ENCODE measurements at regions of chr10 and their contacts with region 1.

Region 1: DNA sequence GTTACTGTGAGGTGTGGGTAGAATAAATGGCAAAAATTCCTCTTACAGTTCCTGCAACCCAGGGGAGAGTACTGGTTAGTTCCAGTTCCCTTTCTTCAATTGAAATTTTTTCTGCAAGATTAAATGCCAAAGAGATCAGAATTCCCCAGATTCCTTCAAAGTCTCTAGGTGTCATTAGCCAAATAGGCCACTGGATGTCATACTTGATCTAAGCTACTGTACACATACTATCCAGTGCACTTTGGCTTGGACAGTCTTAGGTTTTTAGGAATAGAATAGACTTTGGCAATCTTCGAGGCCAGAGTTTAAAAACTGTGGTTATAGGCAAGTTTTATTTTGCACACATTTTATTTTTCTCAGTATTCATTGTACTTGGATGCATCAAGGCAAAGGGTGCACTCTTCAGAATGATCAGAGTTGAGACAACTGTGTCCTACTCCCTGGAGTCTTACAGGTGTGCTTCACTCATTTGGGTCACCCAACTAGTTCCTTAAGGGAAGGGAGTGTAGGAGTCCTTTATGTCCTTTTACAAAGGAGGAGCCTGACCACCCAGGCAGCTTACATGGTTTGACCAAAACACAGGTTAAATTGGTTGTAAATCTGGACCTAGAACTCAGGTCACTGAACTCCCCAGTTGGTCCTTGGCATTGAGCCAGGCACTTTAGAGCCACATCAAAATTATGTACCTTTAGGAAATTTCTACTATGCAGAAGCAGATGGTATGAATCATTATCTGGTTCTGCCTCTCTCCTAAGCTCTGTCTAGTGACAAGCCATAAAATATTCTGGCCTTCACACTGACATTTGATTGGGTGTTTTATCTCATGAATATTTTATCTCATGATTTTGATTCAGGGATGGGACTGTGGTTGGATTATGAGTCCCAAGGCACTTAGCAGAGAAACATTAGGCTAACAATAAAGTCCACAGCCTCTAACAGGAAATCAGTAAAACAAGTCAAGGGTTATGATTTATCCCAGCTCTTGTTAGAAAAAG is 49.5 kb downstream of the ASAH2B start:
- DNase-seq: no peak
- ATAC-seq: peak; percentile 64 to 70
- H3K4me3 ChIP-seq: no peak overlapping the region
- H3K27ac ChIP-seq: no peak overlapping the region
- H3K4me1 ChIP-seq: no peaks in the 10 kb centered on the region
- H3K27me3 ChIP-seq: no peaks in the 10 kb centered on the region

Region 2: DNA sequence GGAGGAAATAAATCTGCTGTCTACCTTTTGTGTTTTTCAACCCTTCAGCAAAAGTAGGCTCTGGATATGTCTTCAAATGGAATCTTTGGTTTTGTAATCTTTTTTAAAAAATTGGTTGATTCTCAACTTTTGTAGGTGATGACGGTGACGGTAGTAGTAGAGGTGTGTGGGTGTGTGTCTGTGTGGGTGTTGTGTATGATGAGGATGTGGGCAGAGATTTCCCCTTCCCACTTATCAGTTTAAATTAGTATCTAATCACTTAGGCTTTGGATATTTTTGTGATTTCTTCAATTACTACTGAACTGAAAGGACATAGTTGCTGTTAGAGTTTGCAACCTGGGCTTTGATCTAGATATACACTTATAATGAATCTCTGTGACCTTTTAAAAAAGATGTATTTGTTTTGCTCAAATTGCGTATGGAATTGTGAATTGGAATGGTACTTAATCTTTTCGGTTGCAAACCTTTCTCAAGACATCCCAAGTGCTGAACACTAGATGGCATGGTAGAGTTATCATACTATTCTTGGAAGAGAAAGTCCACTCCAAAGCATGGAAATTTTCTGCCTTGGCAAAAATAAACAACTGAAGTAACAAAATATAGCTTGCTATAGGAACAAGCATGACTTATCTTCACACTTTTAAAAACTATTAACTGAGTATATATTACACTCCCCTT is 148.1 kb after region 1 on chr10:
- intact Hi-C with region 1: loop called in 1 of 4 experiments (anchors 10 kb)
- DNase-seq: no peak
- ATAC-seq: no peak
- H3K4me3 ChIP-seq: no peak overlapping the region
- H3K27ac ChIP-seq: no peak overlapping the region
- H3K4me1 ChIP-seq: no peaks in the 10 kb centered on the region
- H3K27me3 ChIP-seq: no peaks in the 10 kb centered on the region

Measured in right cardiac atrium (tissue), 5 donors.